Astrocyte of the cerebellum (primary cell): ENCODE measurements at regions of chr1 and their contacts with region 1.

Region 1: DNA sequence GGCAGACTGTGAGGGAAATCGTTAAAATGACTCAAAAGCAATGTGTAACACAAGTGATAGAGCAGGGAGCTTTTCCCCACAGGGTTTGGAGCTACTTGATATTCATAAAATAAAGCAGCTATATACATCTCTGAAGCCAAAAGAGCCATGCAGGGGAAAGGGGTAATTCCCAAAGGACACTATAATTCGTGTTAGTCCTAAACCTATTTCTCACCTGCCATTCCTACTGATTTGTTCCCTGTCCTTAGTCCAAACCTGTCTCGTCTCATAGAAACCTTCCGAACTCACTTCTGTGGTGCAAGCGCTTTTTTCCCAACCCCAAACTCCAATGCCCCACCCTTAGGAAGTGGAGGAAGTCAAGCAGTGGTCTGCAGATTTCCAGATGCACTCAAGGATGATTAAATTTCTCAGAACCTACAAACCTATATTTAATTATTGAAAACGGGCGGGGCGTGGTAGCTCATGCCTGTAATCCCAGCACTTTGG is 946 bp upstream of the HNRNPR start:
- DNase-seq: no peak
- H3K4me3 ChIP-seq: peak overlapping the region; percentile 85
- CTCF ChIP-seq: no peak

Region 2: GRCh38 chr1:23290836-23291565 is 54.0 kb before region 1 on chr1:
- in situ Hi-C with region 1: no loop called
- DNase-seq: no peak
- H3K4me3 ChIP-seq: no peak overlapping the region
- CTCF ChIP-seq: no peak

Region 3: DNA sequence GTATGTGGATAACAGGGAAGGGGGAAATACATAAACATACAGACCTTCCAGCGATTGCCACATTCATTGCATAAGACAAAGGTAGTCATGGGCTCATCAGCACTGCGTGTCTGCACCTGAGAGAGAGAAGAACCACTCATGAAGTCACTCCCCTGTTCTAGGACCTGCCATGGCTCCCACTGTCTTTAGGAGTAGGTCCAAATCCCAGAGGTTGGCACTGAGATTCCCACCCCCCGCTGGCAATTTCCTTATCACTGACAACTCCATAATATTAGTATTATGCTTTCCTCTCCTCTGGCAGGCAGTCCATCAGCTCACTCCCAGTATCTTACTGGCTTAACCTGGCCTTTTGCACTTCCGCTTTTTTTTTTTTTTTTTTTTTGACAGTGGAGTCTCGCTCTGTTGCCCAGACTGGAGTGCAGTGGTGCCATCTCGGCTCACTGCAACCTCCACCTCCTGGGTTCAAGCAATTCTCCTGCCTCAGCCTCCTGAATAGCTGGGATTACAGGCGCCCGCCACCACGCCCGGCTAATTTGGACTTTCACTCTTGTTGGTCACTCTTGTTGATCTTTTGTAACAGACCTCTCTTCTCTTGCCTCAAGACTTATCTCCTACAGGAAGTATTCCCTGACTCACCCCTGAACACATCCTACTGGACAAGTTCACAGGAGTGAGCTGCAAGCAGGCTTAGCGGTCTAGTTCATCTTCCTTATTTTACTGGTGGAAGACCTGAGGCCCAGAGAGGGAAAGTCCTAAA is 39.5 kb after region 1 on chr1:
- in situ Hi-C with region 1: loop called (anchors 5 kb)
- DNase-seq: no peak
- H3K4me3 ChIP-seq: no peak overlapping the region
- CTCF ChIP-seq: no peak